HepG2 (cell line): ENCODE measurements at regions of chr2 and their contacts with region 1.

Region 1: GRCh38 chr2:52558265-52558664 is 1209.3 kb upstream of the CHAC2 start:
- DNase-seq: no peak
- ATAC-seq: no peak
- H3K4me3 ChIP-seq: no peak overlapping the region
- H3K27ac ChIP-seq: no peak overlapping the region
- H3K4me1 ChIP-seq: no peaks in the 10 kb centered on the region
- H3K27me3 ChIP-seq: no peaks in the 10 kb centered on the region
- CTCF ChIP-seq: no peak
- EP300 ChIP-seq: no peak
- POLR2A ChIP-seq: no peak
- RAD21 ChIP-seq: no peak

Region 2: GRCh38 chr2:52512760-52513159 is 45.5 kb before region 1 on chr2:
- CTCF ChIA-PET with region 1: no interaction called
- POLR2A ChIA-PET with region 1: no interaction called
- in situ Hi-C with region 1: no loop called
- intact Hi-C with region 1: loop called (anchors 2 kb)
- DNase-seq: no peak
- ATAC-seq: no peak
- H3K4me3 ChIP-seq: no peak overlapping the region
- H3K27ac ChIP-seq: no peak overlapping the region
- H3K4me1 ChIP-seq: no peaks in the 10 kb centered on the region
- H3K27me3 ChIP-seq: no peaks in the 10 kb centered on the region
- CTCF ChIP-seq: no peak
- EP300 ChIP-seq: no peak
- POLR2A ChIP-seq: no peak
- RAD21 ChIP-seq: no peak

Region 3: DNA sequence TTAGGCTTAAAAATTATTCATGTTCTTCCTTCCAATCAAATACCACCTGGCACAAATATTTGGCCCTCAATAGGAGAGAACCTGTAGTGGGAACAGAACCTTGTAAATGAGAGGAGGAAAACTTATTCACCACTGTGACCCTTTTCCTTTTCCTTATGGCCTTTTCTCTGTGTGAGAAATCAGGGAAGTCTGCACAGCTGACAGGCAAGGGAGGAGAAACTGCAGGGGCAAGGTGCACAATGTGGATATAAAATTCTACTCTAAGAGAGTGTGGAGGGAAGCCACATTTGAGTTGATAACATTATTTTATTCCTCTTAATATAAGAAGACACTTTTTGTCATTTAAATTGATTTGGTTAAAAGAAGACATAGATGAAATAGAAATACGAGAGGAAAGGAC is 37.6 kb before region 1 on chr2:
- CTCF ChIA-PET with region 1: no interaction called
- POLR2A ChIA-PET with region 1: no interaction called
- in situ Hi-C with region 1: loop called (anchors 5 kb)
- intact Hi-C with region 1: no loop called
- DNase-seq: no peak
- ATAC-seq: no peak
- H3K4me3 ChIP-seq: no peak overlapping the region
- H3K27ac ChIP-seq: no peak overlapping the region
- H3K4me1 ChIP-seq: no peaks in the 10 kb centered on the region
- H3K27me3 ChIP-seq: no peaks in the 10 kb centered on the region
- CTCF ChIP-seq: no peak
- EP300 ChIP-seq: no peak
- POLR2A ChIP-seq: no peak
- RAD21 ChIP-seq: no peak

Region 4: DNA sequence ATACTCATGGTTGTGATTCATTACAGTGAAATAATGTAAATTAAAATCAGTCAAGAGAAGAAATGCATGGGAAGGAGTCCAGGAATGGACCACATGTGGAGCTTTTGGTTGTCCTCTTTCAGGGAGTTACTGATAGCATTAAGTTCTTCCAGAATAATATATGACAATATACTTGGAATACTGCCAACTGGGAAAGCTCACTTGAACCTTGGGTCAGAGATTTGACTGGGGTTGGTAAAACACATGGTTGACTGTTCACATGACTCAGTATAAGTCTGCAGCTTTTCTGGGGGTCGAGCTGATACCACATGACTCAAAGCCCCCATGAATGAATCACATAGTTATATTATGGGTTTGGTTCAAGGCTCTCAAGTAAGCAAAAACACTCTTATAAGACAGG is 100.3 kb after region 1 on chr2:
- CTCF ChIA-PET with region 1: no interaction called
- POLR2A ChIA-PET with region 1: no interaction called
- in situ Hi-C with region 1: no loop called
- intact Hi-C with region 1: no loop called
- DNase-seq: no peak
- ATAC-seq: no peak
- H3K4me3 ChIP-seq: no peak overlapping the region
- H3K27ac ChIP-seq: no peak overlapping the region
- H3K4me1 ChIP-seq: no peaks in the 10 kb centered on the region
- H3K27me3 ChIP-seq: no peaks in the 10 kb centered on the region
- CTCF ChIP-seq: no peak
- EP300 ChIP-seq: no peak
- POLR2A ChIP-seq: no peak
- RAD21 ChIP-seq: no peak

Region 5: GRCh38 chr2:52686935-52687334 is 128.7 kb after region 1 on chr2:
- CTCF ChIA-PET with region 1: no interaction called
- POLR2A ChIA-PET with region 1: no interaction called
- in situ Hi-C with region 1: no loop called
- intact Hi-C with region 1: no loop called
- DNase-seq: peak; percentile 2
- ATAC-seq: no peak
- H3K4me3 ChIP-seq: no peak overlapping the region
- H3K27ac ChIP-seq: no peak overlapping the region
- H3K4me1 ChIP-seq: no peaks in the 10 kb centered on the region
- H3K27me3 ChIP-seq: no peaks in the 10 kb centered on the region
- CTCF ChIP-seq: no peak
- EP300 ChIP-seq: no peak
- POLR2A ChIP-seq: no peak
- RAD21 ChIP-seq: no peak

Region 6: DNA sequence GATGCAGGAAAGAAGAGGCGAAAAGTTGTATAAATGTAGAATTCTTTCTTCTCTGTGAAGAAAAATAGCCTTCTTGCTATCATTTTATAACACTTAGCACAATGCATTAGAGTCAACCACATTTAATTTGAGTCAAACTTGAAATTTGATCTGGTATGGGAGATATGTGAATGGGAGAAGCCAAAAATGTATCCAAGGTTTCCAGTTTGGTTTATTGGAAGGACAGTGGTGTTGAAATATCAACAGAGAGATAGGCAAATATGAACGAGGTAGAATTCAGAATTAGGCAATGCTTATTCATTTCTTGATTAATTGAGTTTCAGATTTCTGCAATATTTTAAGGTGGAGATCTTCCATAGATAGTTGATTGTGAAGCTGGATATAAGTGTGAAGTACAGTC is 217.4 kb after region 1 on chr2:
- CTCF ChIA-PET with region 1: no interaction called
- POLR2A ChIA-PET with region 1: no interaction called
- in situ Hi-C with region 1: no loop called
- intact Hi-C with region 1: no loop called
- DNase-seq: no peak
- ATAC-seq: no peak
- H3K4me3 ChIP-seq: no peak overlapping the region
- H3K27ac ChIP-seq: no peak overlapping the region
- H3K4me1 ChIP-seq: no peaks in the 10 kb centered on the region
- H3K27me3 ChIP-seq: no peaks in the 10 kb centered on the region
- CTCF ChIP-seq: no peak
- EP300 ChIP-seq: no peak
- POLR2A ChIP-seq: no peak
- RAD21 ChIP-seq: no peak